ENCODE measurements at regions of chr9 and their contacts with region 1.

Region 1: DNA sequence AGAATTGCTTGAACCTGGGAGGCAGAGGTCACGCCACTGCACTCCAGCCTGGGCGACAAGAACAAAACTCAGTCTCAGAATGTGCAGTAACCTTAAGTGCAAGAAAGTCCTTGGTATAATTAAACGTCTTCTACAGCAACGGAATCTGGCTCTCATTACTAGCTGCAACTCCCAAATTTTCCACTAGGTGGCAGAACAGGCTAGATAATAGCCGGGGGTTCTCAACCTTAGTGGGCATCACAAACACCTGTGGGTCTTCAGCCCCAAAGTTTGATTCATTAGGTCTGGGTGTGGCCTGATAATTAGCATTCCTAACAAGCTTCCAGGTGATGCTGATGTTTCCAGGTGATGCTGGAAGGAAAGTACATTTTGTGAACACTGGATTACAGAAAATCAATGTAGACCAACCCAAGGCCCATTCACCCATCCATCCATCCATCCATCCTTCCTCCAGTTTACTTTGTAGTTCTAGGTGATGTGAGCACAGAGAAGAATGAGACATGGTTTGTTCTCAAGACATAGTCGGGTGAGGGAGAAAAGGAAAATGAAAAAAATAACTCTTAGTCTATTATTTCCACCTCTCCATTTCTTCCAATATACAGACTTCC is 37.3 kb downstream of the FBXW2 start:
- DNase-seq: peak; percentile 72
- H3K4me3 Mint-ChIP-seq: no peak overlapping the region
- H3K27ac Mint-ChIP-seq: peak overlapping the region; percentile 15
- H3K4me1 Mint-ChIP-seq: peaks cover 22% of the 10 kb centered on the region
- H3K27me3 Mint-ChIP-seq: no peaks in the 10 kb centered on the region

Region 2: DNA sequence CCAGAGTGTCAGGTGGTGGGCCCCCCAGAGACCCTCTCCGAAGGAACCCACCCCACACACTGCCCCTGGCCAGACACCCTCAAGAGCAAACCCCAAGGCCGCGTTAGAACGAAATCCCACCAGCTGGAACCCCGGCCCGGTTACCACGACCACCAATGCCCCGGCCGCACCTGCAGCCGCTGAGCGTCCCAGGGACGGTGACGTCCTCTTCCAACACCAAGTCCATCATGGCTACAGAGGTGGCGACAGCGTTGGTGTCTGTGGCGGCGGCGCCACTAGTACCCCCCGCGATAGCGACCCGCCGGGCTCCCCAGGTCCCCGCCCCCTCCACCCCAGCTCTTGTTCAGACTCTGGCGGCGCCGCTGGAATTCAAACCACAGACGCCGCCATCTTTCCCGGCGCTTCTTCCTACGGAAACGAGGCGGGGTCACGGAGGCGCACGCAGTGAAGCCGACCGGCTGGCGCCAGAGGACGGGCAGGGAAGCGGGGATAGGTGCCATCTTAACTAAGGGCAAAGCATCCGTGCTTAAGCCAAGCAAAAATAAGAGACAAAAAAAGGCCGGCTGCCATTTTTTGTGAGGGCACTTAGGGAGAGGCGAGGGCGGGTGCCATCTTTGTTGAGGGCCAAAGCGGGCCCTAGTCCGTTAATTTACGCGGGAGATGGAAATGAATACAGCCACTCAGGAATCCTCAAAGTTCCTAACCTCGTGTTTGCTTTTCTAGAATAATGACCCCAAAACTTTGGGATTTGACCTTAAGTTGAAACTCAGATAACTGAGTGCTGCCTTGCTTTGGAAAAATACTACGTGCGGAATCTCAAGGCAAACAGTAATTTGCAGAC is 176.0 kb before region 1 on chr9 and contains the start of gene CDK5RAP2:
- CTCF ChIA-PET with region 1: no interaction called
- POLR2A ChIA-PET with region 1: no interaction called
- intact Hi-C with region 1: no loop called
- DNase-seq: peak; percentile 96
- H3K4me3 Mint-ChIP-seq: peak within 1 kb of the TSS; percentile 97
- H3K27ac Mint-ChIP-seq: peak within 1 kb of the TSS; percentile 85
- H3K4me1 Mint-ChIP-seq: peaks cover 45% of the 10 kb centered on the region
- H3K27me3 Mint-ChIP-seq: no peaks in the 10 kb centered on the region
- total RNA-seq, gene CDK5RAP2: 75.3 to 75.9 TPM

Region 3: GRCh38 chr9:120745278-120745677 is 10.7 kb before region 1 on chr9:
- CTCF ChIA-PET with region 1: interaction called, 15 read pairs
- POLR2A ChIA-PET with region 1: no interaction called
- intact Hi-C with region 1: no loop called
- DNase-seq: no peak
- H3K4me3 Mint-ChIP-seq: no peak overlapping the region
- H3K27ac Mint-ChIP-seq: no peak overlapping the region
- H3K4me1 Mint-ChIP-seq: peaks cover 3% of the 10 kb centered on the region
- H3K27me3 Mint-ChIP-seq: no peaks in the 10 kb centered on the region

Region 4: GRCh38 chr9:120792898-120793765 is 37.2 kb after region 1 on chr9 and contains the start of gene FBXW2:
- CTCF ChIA-PET with region 1: interaction called, 3 read pairs
- POLR2A ChIA-PET with region 1: no interaction called
- intact Hi-C with region 1: loop called (anchors 5 kb)
- DNase-seq: peak; percentile 95
- H3K4me3 Mint-ChIP-seq: peak within 1 kb of the TSS; percentile 80
- H3K27ac Mint-ChIP-seq: peak within 1 kb of the TSS; percentile 93
- H3K4me1 Mint-ChIP-seq: peaks cover 42% of the 10 kb centered on the region
- H3K27me3 Mint-ChIP-seq: no peaks in the 10 kb centered on the region
- total RNA-seq, gene FBXW2: 70.2 to 72.5 TPM

Region 5: GRCh38 chr9:120936011-120936763 is 180.3 kb after region 1 on chr9:
- CTCF ChIA-PET with region 1: interaction called, 32 read pairs
- POLR2A ChIA-PET with region 1: no interaction called
- intact Hi-C with region 1: loop called (anchors 1 kb)
- DNase-seq: peak; percentile 94
- H3K4me3 Mint-ChIP-seq: peak overlapping the region; percentile 48
- H3K27ac Mint-ChIP-seq: peak overlapping the region; percentile 99
- H3K4me1 Mint-ChIP-seq: peaks cover 62% of the 10 kb centered on the region
- H3K27me3 Mint-ChIP-seq: no peaks in the 10 kb centered on the region

Region 6: GRCh38 chr9:121059998-121060636 is 304.2 kb after region 1 on chr9:
- CTCF ChIA-PET with region 1: interaction called, 84 read pairs
- POLR2A ChIA-PET with region 1: no interaction called
- intact Hi-C with region 1: loop called (anchors 1 kb)
- DNase-seq: no peak
- H3K4me3 Mint-ChIP-seq: no peak overlapping the region
- H3K27ac Mint-ChIP-seq: no peak overlapping the region
- H3K4me1 Mint-ChIP-seq: peaks cover 23% of the 10 kb centered on the region
- H3K27me3 Mint-ChIP-seq: no peaks in the 10 kb centered on the region

Measured in activated CD4-positive, alpha-beta memory T cell treated with anti-CD3 and anti-CD28 coated beads for 36 hours (primary cell).